ENCODE measurements at regions of chr15 and their contacts with region 1.

Region 1: DNA sequence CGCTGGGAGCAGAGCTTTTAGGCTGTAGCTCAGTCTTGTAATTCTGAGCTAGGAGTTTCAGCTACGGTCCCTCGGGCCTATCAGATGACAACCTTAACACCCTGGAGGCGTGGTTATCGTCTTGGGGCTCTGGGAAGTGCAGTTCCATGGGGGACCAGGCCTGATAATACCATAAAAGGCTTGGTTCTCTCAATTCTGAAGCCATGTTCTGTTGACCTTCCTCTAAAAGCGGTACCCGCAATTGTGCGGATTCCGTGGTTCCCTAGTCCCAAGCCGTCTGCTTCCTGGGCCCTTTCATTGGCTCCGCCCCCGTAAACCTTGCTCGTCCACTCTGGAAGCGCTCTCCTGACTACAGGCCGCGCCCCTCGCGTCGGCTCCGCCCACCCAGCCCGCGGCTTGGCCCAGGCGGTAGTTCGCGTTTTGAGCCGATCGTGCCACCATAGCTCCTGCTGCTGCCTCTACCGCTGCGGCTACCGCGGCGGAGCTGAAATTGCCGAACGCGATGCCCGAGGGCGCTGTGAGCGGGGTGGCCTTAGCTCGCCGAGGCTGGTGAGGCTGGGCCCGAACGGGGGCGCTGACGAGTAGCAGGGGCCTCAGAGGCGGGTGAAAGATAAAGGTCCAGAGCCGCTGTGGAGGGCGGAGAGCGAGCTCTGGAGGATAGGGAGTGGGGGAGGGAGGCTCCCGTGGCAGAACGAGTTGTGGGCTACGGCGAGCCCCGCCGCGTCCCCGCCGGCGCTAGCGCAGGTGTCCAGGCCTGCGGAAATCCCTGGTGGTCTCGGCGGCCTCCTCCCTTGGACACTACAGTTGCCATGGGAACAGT is at the start of gene MAPKBP1:
- DNase-seq: peak; percentile 96
- H3K4me3 ChIP-seq: peak within 1 kb of the TSS; percentile 74 to 93 (median 88)
- H3K27ac ChIP-seq: peak within 1 kb of the TSS; percentile 89 to 93
- H3K4me1 ChIP-seq: peaks cover 5 to 11% of the 10 kb centered on the region in 2 donors
- H3K27me3 ChIP-seq: no peaks in the 10 kb centered on the region
- CTCF ChIP-seq: peak; percentile 20 to 44 (median 40)
- POLR2A ChIP-seq: no peak
- total RNA-seq, gene MAPKBP1: 11.5 to 29.3 (median 24.3) TPM

Region 2: GRCh38 chr15:41819455-41820050 is 45.3 kb after region 1 on chr15:
- intact Hi-C with region 1: loop called (anchors 5 kb)
- DNase-seq: no peak
- H3K4me3 ChIP-seq: no peak overlapping the region
- H3K27ac ChIP-seq: no peak overlapping the region
- H3K4me1 ChIP-seq: no peaks in the 10 kb centered on the region
- H3K27me3 ChIP-seq: no peaks in the 10 kb centered on the region
- CTCF ChIP-seq: no peak
- POLR2A ChIP-seq: no peak

Region 3: GRCh38 chr15:41838400-41838897 is 64.2 kb after region 1 on chr15 and contains the start of gene PLA2G4B:
- intact Hi-C with region 1: no loop called
- DNase-seq: peak; percentile 88 to 94
- H3K4me3 ChIP-seq: no peak within 1 kb of the TSS
- H3K27ac ChIP-seq: peak within 1 kb of the TSS; percentile 86 to 90
- H3K4me1 ChIP-seq: peaks cover 0 to 4% of the 10 kb centered on the region in 2 donors
- H3K27me3 ChIP-seq: no peaks in the 10 kb centered on the region
- CTCF ChIP-seq: no peak
- POLR2A ChIP-seq: no peak
- total RNA-seq, gene PLA2G4B: 3.2 to 11.0 (median 10.2) TPM

Region 4: DNA sequence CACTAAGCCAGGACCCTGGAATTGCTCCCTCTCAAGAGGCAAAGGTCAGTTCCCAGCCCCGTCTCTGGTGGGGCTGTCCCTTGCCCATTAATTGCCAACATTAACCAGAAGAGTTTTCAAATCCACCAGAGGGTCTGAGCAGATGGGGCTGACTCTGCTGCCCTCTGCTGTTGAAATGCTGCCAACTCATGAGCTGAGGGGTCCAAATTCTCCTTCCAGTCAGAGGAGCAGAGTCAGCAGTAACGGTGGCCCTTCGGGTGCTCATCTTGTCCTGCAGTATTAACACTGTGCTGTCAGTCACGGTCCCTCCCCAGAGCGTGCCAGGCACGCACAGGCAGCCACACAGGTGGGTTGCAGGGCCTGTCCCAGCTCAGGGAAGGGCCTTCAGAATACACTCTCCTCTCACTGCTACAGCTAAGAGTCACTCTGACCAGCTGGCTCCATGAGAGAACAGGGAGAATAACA is 130.3 kb after region 1 on chr15:
- intact Hi-C with region 1: loop called (anchors 5 kb)
- DNase-seq: no peak
- H3K4me3 ChIP-seq: no peak overlapping the region
- H3K27ac ChIP-seq: no peak overlapping the region
- H3K4me1 ChIP-seq: no peaks in the 10 kb centered on the region
- H3K27me3 ChIP-seq: no peaks in the 10 kb centered on the region
- CTCF ChIP-seq: peak; percentile 58 to 86 (median 81)
- POLR2A ChIP-seq: no peak